ENCODE measurements at regions of chr1 and their contacts with region 1.

Region 1: DNA sequence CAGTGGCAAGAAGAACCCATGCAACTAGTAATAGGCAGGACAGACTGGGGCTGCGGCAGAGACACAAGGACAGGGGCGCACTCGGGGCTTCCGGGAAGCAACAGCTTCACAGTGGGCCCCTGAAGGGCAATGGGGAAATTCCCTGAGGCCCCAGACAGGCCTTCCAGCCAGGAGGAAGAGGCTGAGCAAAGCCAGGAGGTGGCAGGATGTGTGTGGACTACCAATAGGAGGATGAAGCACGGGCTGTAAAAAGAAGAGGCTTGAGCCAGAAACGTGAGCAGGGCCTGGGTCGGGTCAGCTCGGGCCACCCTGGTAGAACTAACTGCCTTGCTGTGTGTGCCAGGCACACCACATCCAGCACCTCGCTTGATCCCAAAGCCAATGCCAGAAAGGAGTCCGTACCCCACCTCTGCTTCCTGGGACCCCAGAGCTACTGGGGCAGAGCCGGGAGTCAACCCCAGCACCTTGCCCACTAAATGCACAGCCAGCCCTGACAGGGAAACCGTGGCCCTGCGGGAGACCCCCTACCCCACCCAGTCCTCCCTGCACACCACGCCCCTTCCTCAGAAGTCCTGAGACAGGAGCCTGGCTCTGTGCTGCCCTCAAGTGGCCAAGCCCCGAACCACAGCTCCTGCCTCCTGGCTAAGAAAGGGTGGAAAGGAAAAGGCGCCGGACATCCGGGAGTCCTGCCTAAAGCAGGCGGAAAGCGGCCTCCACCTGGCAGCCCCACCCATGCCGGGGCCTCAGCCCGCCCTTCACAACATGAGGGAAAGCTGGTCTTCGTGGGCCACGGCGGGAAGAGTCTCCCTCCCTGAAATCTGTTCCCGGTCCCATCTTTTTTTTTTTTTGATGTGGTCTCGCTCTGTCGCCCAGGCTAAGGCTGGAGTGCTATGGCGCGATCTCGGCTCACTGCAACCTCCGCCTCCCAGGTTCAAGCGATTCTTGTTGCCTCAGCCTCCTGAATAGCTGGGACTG is 33.7 kb downstream of the TTC39A start:
- DNase-seq: peak; percentile 75 to 98 (median 86)

Region 2: GRCh38 chr1:51433269-51433971 is 136.8 kb after region 1 on chr1:
- intact Hi-C with region 1: no loop called
- DNase-seq: no peak

Region 3: GRCh38 chr1:51535006-51535592 is 238.4 kb after region 1 on chr1:
- intact Hi-C with region 1: loop called (anchors 10 kb)
- DNase-seq: peak in 7 of 10 donors; percentile 27 to 92 (median 68)

Measured in posterior cingulate gyrus (tissue), 11 donors.